Activated B cell treated with CpG ODN at 0.5 μM for 24 hours (primary cell): ENCODE measurements at regions of chr1 and their contacts with region 1.

Region 1: DNA sequence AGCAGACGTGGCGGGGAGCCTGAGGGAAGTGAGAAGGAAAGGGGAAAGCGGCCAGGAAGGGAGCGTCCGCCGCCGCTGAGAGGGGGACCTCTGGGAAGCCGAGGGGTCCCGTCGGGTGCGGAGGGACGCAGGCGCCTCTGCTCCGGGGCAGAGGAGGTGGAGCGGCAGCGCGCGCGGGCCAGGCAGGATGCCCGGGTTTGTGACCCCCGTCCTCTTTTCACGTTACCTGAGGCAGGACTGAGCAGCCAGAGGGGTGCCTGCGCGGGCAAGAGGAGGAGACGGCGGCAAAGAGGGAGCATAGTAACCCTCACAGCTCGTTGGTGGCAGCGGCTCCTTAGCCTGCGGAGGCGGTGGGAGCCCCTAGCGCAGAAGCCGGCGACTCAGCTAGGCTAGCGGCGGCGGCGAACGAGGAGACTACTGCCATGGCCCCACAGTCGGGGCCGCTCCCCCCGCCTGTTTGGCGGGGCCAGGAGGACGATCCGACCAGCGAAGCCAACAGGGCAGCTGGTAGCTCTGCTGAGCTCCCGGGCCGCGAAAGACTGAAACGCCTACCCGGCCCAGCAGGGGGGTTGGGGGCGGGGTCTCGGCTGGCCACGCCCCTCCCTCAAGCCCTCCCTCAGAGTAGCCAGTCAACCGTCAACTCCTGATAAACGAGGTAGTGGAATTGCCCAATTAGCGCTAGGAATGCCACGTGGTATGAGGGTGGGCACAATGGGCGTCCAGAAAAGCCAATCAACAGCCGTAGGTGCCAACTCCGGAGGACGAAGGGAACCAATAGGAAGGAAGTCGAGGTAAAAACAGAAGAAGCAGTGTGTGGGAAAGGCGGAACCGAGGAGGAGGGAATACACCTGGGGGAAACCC is at the start of gene TESK2:
- DNase-seq: peak; percentile 95
- ATAC-seq: peak; percentile 89
- H3K4me3 Mint-ChIP-seq: no peak within 1 kb of the TSS
- H3K27ac Mint-ChIP-seq: no peak within 1 kb of the TSS
- H3K4me1 Mint-ChIP-seq: peaks cover 12% of the 10 kb centered on the region
- H3K27me3 Mint-ChIP-seq: no peaks in the 10 kb centered on the region
- CTCF ChIP-seq: no peak
- total RNA-seq, gene TESK2: 11.7 and 12.2 TPM in 2 replicates

Region 2: DNA sequence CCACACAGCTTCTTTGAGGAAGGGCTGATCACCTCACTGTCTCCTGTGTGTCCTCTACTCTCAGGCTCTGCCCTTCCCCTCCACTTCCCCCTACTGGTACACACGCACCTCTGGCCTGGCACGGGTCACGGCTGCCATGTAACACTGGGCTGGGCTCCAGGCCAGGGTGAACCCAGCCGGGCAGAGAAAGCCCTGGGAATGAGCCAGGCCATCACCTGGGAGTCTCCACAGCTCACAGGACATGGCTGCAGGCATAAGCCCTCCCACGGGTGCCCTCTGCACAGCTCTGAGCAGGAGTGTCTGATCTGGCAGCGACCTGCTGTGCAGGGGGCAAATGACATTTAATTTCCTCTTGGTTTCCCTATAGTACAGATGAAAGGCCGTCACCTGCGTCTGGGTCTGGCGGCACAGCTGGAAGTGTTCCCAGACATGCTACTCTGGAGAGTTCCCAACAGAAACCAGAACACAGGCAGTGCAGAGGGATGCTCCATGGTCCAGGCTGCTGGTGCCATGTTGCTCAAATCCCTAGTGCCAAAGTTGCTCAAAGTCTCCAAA is 1197.0 kb before region 1 on chr1:
- CTCF ChIA-PET with region 1: no interaction called
- POLR2A ChIA-PET with region 1: no interaction called
- intact Hi-C with region 1: no loop called
- DNase-seq: no peak
- ATAC-seq: no peak
- H3K4me3 Mint-ChIP-seq: no peak overlapping the region
- H3K27ac Mint-ChIP-seq: no peak overlapping the region
- H3K4me1 Mint-ChIP-seq: no peaks in the 10 kb centered on the region
- H3K27me3 Mint-ChIP-seq: no peaks in the 10 kb centered on the region
- CTCF ChIP-seq: no peak

Region 3: GRCh38 chr1:44835738-44836675 is 654.8 kb before region 1 on chr1:
- CTCF ChIA-PET with region 1: no interaction called
- POLR2A ChIA-PET with region 1: no interaction called
- intact Hi-C with region 1: loop called (anchors 2 kb)
- DNase-seq: peak; percentile 75
- ATAC-seq: peak; percentile 99
- H3K4me3 Mint-ChIP-seq: no peak overlapping the region
- H3K27ac Mint-ChIP-seq: peak overlapping the region; percentile 47
- H3K4me1 Mint-ChIP-seq: peaks cover 13% of the 10 kb centered on the region
- H3K27me3 Mint-ChIP-seq: no peaks in the 10 kb centered on the region
- CTCF ChIP-seq: peak; percentile 71

Region 4: GRCh38 chr1:45141247-45142003 is 349.4 kb before region 1 on chr1:
- CTCF ChIA-PET with region 1: no interaction called
- POLR2A ChIA-PET with region 1: no interaction called
- intact Hi-C with region 1: no loop called
- DNase-seq: no peak
- ATAC-seq: no peak
- H3K4me3 Mint-ChIP-seq: no peak overlapping the region
- H3K27ac Mint-ChIP-seq: no peak overlapping the region
- H3K4me1 Mint-ChIP-seq: no peaks in the 10 kb centered on the region
- H3K27me3 Mint-ChIP-seq: peaks cover 12% of the 10 kb centered on the region
- CTCF ChIP-seq: no peak

Region 5: DNA sequence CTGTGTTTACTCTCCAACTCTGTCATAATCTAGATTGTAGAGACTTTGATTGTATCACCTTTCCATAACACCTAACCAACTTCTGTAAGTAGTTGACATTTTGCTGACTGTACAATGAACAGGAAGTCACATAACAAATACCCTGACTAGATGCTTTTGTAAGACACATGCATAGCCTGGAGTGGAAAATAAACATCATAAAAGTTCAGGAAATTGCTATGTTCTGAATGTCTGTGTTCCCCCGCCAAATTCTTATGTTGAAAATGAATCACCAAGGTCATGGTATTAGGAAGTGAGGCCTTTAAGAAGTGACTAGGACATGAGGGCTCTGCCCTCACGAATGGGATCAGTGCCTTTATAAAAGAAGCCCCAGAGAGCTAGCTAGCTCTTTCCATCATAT is 244.1 kb before region 1 on chr1:
- CTCF ChIA-PET with region 1: no interaction called
- POLR2A ChIA-PET with region 1: no interaction called
- intact Hi-C with region 1: no loop called
- DNase-seq: no peak
- ATAC-seq: no peak
- H3K4me3 Mint-ChIP-seq: no peak overlapping the region
- H3K27ac Mint-ChIP-seq: no peak overlapping the region
- H3K4me1 Mint-ChIP-seq: no peaks in the 10 kb centered on the region
- H3K27me3 Mint-ChIP-seq: peaks cover 19% of the 10 kb centered on the region
- CTCF ChIP-seq: no peak

Region 6: GRCh38 chr1:45258059-45258650 is 232.7 kb before region 1 on chr1:
- CTCF ChIA-PET with region 1: no interaction called
- POLR2A ChIA-PET with region 1: no interaction called
- intact Hi-C with region 1: no loop called
- DNase-seq: no peak
- ATAC-seq: no peak
- H3K4me3 Mint-ChIP-seq: no peak overlapping the region
- H3K27ac Mint-ChIP-seq: no peak overlapping the region
- H3K4me1 Mint-ChIP-seq: no peaks in the 10 kb centered on the region
- H3K27me3 Mint-ChIP-seq: peaks cover 8% of the 10 kb centered on the region
- CTCF ChIP-seq: no peak

Region 7: DNA sequence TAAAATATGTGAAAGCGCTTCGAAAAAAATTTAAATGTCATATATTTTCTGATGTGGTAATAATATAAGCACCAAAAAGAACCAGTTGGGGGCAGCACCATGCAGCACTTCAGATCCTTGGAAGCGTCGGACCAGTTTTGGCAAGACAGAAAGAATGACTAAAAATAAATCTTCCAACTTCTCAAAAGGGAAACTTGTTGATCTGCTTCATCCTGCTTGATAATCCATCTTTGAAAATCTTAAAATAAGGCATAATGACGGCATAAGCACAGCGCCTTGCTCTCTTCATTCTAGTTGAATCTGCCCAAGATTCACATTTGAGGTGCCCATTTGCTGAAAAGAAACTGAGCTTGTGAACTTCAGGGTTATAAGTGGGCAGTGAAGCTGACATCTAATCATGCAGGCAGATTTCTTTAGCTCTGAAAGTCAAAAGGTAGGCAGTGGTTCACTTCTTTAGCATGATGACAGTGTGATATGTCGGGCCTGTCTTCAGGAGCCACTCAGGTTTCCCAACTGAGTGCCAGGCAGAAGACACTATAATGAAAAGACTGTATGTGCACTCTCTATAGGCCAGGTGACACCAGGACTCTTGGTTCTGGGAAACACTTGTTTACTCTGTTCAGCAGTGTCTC is 130.9 kb before region 1 on chr1:
- CTCF ChIA-PET with region 1: interaction called, 326 read pairs
- POLR2A ChIA-PET with region 1: interaction called, 40 read pairs
- intact Hi-C with region 1: loop called (anchors 1 kb)
- DNase-seq: no peak
- ATAC-seq: peak; percentile 73
- H3K4me3 Mint-ChIP-seq: peak overlapping the region; percentile 1
- H3K27ac Mint-ChIP-seq: peak overlapping the region; percentile 37
- H3K4me1 Mint-ChIP-seq: peaks cover 19% of the 10 kb centered on the region
- H3K27me3 Mint-ChIP-seq: no peaks in the 10 kb centered on the region
- CTCF ChIP-seq: no peak

Region 8: DNA sequence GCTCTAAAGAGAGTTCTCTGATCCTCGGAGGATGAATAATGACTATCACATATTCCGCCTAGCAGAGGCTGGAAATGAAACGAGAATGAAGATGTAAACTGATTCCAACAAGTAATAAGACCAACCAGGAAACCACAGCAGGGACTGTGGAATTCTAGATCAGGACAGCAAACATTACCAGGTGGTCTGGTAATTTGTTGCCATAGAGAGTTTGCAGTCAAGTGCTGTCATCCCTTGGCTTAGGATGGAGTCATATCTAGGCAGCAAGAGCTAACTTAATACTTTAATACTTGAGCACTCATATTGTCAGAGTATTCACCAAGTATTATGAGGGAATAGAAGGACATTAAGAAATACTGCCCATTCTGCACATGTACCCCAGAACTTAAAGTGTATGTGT is 105.6 kb before region 1 on chr1:
- CTCF ChIA-PET with region 1: no interaction called
- POLR2A ChIA-PET with region 1: interaction called, 16 read pairs
- intact Hi-C with region 1: no loop called
- DNase-seq: no peak
- ATAC-seq: no peak
- H3K4me3 Mint-ChIP-seq: no peak overlapping the region
- H3K27ac Mint-ChIP-seq: no peak overlapping the region
- H3K4me1 Mint-ChIP-seq: no peaks in the 10 kb centered on the region
- H3K27me3 Mint-ChIP-seq: no peaks in the 10 kb centered on the region
- CTCF ChIP-seq: no peak

Region 9: GRCh38 chr1:45410850-45411314 is 80.0 kb before region 1 on chr1:
- CTCF ChIA-PET with region 1: interaction called, 13 read pairs
- POLR2A ChIA-PET with region 1: interaction called, 44 read pairs
- intact Hi-C with region 1: loop called (anchors 1 kb)
- DNase-seq: no peak
- ATAC-seq: no peak
- H3K4me3 Mint-ChIP-seq: peak overlapping the region; percentile 25
- H3K27ac Mint-ChIP-seq: peak overlapping the region; percentile 75
- H3K4me1 Mint-ChIP-seq: peaks cover 68% of the 10 kb centered on the region
- H3K27me3 Mint-ChIP-seq: no peaks in the 10 kb centered on the region
- CTCF ChIP-seq: no peak

Region 10: GRCh38 chr1:45521398-45522323 is 30.8 kb after region 1 on chr1 and contains the start of gene PRDX1:
- CTCF ChIA-PET with region 1: no interaction called
- POLR2A ChIA-PET with region 1: interaction called, 34 read pairs
- intact Hi-C with region 1: no loop called
- DNase-seq: peak; percentile 98
- ATAC-seq: peak; percentile 87
- H3K4me3 Mint-ChIP-seq: peak within 1 kb of the TSS; percentile 93
- H3K27ac Mint-ChIP-seq: peak within 1 kb of the TSS; percentile 92
- H3K4me1 Mint-ChIP-seq: peaks cover 49% of the 10 kb centered on the region
- H3K27me3 Mint-ChIP-seq: no peaks in the 10 kb centered on the region
- CTCF ChIP-seq: no peak
- total RNA-seq, gene PRDX1: 351 and 413 TPM in 2 replicates